CD4-positive, alpha-beta memory T cell (primary cell): ENCODE measurements at regions of chr2 and their contacts with region 1.

Region 1: GRCh38 chr2:15636972-15637785 is 45.5 kb downstream of the DDX1 start:
- DNase-seq: peak; percentile 31 to 48 (median 40)
- H3K4me3 ChIP-seq: no peak overlapping the region
- H3K4me3 Mint-ChIP-seq: no peak overlapping the region
- H3K27ac ChIP-seq: no peak overlapping the region
- H3K27ac Mint-ChIP-seq: peak overlapping the region in 4 of 7 donors; percentile 11 to 80 (median 42)
- H3K4me1 ChIP-seq: no peaks in the 10 kb centered on the region
- H3K4me1 Mint-ChIP-seq: peaks cover 0 to 5% (median 0%) of the 10 kb centered on the region in 4 donors
- H3K27me3 ChIP-seq: no peaks in the 10 kb centered on the region
- H3K27me3 Mint-ChIP-seq: no peaks in the 10 kb centered on the region

Region 2: GRCh38 chr2:16321872-16322271 is 684.7 kb after region 1 on chr2:
- CTCF ChIA-PET with region 1: no interaction called
- POLR2A ChIA-PET with region 1: no interaction called
- intact Hi-C with region 1: loop called (anchors 5 kb)
- DNase-seq: no peak
- H3K4me3 ChIP-seq: no peak overlapping the region
- H3K4me3 Mint-ChIP-seq: no peak overlapping the region
- H3K27ac ChIP-seq: no peak overlapping the region
- H3K27ac Mint-ChIP-seq: no peak overlapping the region
- H3K4me1 ChIP-seq: no peaks in the 10 kb centered on the region
- H3K4me1 Mint-ChIP-seq: no peaks in the 10 kb centered on the region
- H3K27me3 ChIP-seq: no peaks in the 10 kb centered on the region
- H3K27me3 Mint-ChIP-seq: no peaks in the 10 kb centered on the region